ENCODE measurements at regions of chrX and their contacts with region 1.

Region 1: GRCh38 chrX:13653022-13653693 is at the start of gene TCEANC:
- DNase-seq: peak; percentile 92 to 94
- ATAC-seq: peak; percentile 98 to 99
- H3K4me3 ChIP-seq: peak within 1 kb of the TSS; percentile 72 to 83 (median 78)
- H3K27ac ChIP-seq: peak within 1 kb of the TSS; percentile 91 to 97 (median 94)
- H3K4me1 ChIP-seq: peaks cover 14 to 15% of the 10 kb centered on the region in 2 donors
- H3K27me3 ChIP-seq: no peaks in the 10 kb centered on the region
- CTCF ChIP-seq: no peak
- POLR2A ChIP-seq: peak; percentile 61 to 62
- total RNA-seq, gene TCEANC: 2.9 to 4.1 (median 3.3) TPM

Region 2: DNA sequence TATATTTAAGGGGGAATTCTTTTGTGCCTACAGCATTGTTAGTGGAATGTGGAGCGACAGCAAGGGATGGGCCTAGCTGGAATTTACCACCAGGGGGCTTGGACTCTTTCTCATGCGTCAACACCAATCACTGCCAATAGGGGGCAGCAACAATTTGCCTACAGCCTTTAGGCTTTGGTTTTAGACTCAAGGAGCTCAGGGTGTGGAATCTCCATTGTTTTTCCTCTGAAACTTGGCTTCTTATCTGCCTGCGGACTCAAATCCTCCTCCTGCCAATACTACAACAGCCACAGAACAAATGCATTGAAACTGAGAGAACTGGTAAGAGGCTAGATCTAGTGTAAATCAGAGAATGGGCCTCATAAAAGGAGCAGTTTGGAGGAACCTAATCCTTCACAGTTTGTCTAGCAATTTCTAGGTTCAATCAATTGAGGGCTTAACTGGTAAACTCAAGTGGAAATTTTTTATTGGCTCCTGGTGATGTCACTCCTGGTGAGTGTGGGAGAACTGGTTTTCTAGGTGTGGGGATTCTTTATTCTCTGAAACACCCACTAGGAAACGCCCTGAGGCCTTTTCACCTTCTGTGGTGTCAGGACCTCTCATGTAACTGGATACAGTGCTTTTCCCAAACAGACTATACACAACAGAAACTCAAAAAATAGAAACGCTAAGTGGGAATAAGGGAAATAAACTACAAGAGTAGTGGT is 706.2 kb before region 1 on chrX:
- in situ Hi-C with region 1: no loop called
- intact Hi-C with region 1: loop called (anchors 10 kb)
- DNase-seq: peak; percentile 16 to 23
- ATAC-seq: peak; percentile 36 to 39
- H3K4me3 ChIP-seq: no peak overlapping the region
- H3K27ac ChIP-seq: peak overlapping the region in 3 of 4 donors; percentile 19 to 50 (median 43)
- H3K4me1 ChIP-seq: peaks cover 0 to 3% of the 10 kb centered on the region in 2 donors
- H3K27me3 ChIP-seq: no peaks in the 10 kb centered on the region
- CTCF ChIP-seq: peak; percentile 64 to 78 (median 72)
- POLR2A ChIP-seq: no peak

Region 3: GRCh38 chrX:13688958-13689740 is 36.0 kb after region 1 on chrX and contains the start of gene RAB9A:
- in situ Hi-C with region 1: no loop called
- intact Hi-C with region 1: loop called (anchors 2 kb)
- DNase-seq: peak; percentile 68 to 76
- ATAC-seq: peak; percentile 90
- H3K4me3 ChIP-seq: peak within 1 kb of the TSS; percentile 71 to 82 (median 74)
- H3K27ac ChIP-seq: peak within 1 kb of the TSS; percentile 91 to 98 (median 94)
- H3K4me1 ChIP-seq: peaks cover 24 to 30% of the 10 kb centered on the region in 2 donors
- H3K27me3 ChIP-seq: no peaks in the 10 kb centered on the region
- CTCF ChIP-seq: no peak
- POLR2A ChIP-seq: peak; percentile 88 to 94
- total RNA-seq, gene RAB9A: 15.0 to 21.7 (median 18.5) TPM

Region 4: DNA sequence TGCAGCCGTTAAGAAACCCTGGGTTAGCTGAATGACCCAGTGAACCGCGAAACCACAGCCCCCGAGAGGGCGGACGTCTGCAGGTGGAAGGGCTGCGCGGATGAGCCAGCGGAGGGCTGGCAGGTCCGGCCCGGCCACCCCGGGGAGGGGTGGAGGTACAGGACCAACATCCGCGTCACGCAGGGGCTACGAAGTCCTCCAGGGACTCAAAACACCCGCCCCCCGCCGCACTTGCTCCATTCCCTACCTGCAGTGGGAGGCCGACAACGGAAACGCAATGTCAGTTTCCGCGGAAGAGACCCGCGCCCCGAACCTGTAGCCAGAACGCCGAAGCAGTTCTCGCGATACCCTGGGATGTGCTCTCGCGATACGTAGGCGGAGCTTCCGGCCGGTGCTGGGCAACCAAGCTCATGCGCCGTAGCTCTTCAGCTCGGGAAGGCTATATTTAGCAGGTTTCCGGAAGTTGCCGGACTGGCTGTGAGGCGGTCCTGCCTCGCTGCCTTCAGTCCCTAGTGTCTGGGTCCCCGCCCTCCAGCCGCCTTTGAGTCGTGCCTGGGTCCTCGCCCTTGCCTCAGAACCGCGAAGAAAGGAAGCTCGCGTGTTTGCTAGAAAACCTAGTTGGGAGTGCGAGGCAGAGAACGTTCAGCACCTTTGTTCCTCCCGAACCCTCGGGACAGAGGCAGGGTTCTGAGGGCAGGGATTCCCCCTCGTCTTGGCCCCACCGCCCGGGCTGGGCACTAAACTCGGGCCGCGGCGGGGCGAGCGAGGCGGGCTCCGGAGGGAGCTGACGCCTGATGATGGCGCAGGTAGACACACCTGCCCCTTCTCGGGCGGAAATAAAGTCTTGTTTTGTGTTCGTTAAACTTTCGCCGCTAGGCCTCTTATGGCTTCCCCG is 81.4 kb after region 1 on chrX and contains the starts of genes OFD1 and TRAPPC2:
- in situ Hi-C with region 1: loop called in 2 of 4 experiments (anchors 10 kb)
- intact Hi-C with region 1: loop called (anchors 1 kb)
- DNase-seq: peak; percentile 86 to 89
- ATAC-seq: peak; percentile 99
- H3K4me3 ChIP-seq: peak within 1 kb of the TSS; percentile 72 to 94 (median 82)
- H3K27ac ChIP-seq: peak within 1 kb of the TSS; percentile 90 to 93 (median 92)
- H3K4me1 ChIP-seq: peaks cover 6 to 12% of the 10 kb centered on the region in 2 donors
- H3K27me3 ChIP-seq: no peaks in the 10 kb centered on the region
- CTCF ChIP-seq: no peak
- POLR2A ChIP-seq: peak; percentile 87 to 91
- total RNA-seq, gene OFD1: 2.8 to 8.0 (median 7.0) TPM
- total RNA-seq, gene TRAPPC2: 1.4 to 4.3 (median 2.9) TPM

Region 5: GRCh38 chrX:13750204-13750603 is 97.0 kb after region 1 on chrX:
- in situ Hi-C with region 1: loop called in 2 of 4 experiments (anchors 5 to 10 kb)
- intact Hi-C with region 1: loop called (anchors 2 kb)
- DNase-seq: no peak
- ATAC-seq: peak in 1 of 2 donors; percentile 58
- H3K4me3 ChIP-seq: no peak overlapping the region
- H3K27ac ChIP-seq: no peak overlapping the region
- H3K4me1 ChIP-seq: no peaks in the 10 kb centered on the region
- H3K27me3 ChIP-seq: no peaks in the 10 kb centered on the region
- CTCF ChIP-seq: peak; percentile 12 to 54 (median 33)
- POLR2A ChIP-seq: no peak